Adrenal gland (tissue), 19 donors: ENCODE measurements at regions of chr2 and their contacts with region 1.

Region 1: GRCh38 chr2:200703127-200703925 is 108.4 kb upstream of the BZW1 start:
- DNase-seq: peak in 5 of 7 donors; percentile 37 to 67 (median 54)
- H3K4me3 ChIP-seq: no peak overlapping the region
- H3K27ac ChIP-seq: peak overlapping the region in 1 of 5 donors; percentile 2
- H3K4me1 ChIP-seq: no peaks in the 10 kb centered on the region
- H3K27me3 ChIP-seq: no peaks in the 10 kb centered on the region
- CTCF ChIP-seq: peak; percentile 34 to 82 (median 66)
- POLR2A ChIP-seq: no peak

Region 2: GRCh38 chr2:200483729-200484198 is 219.6 kb before region 1 on chr2:
- intact Hi-C with region 1: loop called in 1 of 2 experiments (anchors 5 kb)
- DNase-seq: peak; percentile 35 to 72 (median 62)
- H3K4me3 ChIP-seq: no peak overlapping the region
- H3K27ac ChIP-seq: no peak overlapping the region
- H3K4me1 ChIP-seq: no peaks in the 10 kb centered on the region
- H3K27me3 ChIP-seq: no peaks in the 10 kb centered on the region
- CTCF ChIP-seq: peak; percentile 34 to 55 (median 44)
- POLR2A ChIP-seq: no peak

Region 3: GRCh38 chr2:200578778-200579177 is 124.5 kb before region 1 on chr2:
- intact Hi-C with region 1: loop called (anchors 5 kb)
- DNase-seq: peak in 2 of 7 donors; percentile 35 to 40
- H3K4me3 ChIP-seq: no peak overlapping the region
- H3K27ac ChIP-seq: no peak overlapping the region
- H3K4me1 ChIP-seq: peaks cover 0 to 5% of the 10 kb centered on the region in 2 donors
- H3K27me3 ChIP-seq: no peaks in the 10 kb centered on the region
- CTCF ChIP-seq: peak; percentile 27 to 70 (median 62)
- POLR2A ChIP-seq: no peak

Region 4: DNA sequence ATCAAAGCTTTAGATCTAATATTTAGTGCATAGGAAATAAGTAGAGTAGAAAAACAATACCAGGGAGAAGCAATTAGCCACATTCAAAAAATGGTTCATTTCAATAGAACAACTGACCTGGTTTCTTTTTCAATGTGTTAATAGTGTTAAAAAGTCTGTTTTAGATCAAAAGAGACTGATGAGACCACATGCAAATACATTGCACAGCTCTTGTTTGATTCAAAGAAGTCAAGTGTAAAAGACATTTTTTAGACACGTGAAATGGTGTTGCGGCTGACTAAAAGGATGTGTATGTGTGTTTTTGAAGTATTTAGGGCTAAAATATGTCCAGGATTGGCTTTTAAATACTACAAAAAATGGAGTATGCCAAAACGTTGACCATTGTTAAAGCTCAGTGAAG is 118.7 kb before region 1 on chr2:
- intact Hi-C with region 1: loop called (anchors 5 kb)
- DNase-seq: no peak
- H3K4me3 ChIP-seq: no peak overlapping the region
- H3K27ac ChIP-seq: no peak overlapping the region
- H3K4me1 ChIP-seq: peaks cover 3 to 14% of the 10 kb centered on the region in 2 donors
- H3K27me3 ChIP-seq: no peaks in the 10 kb centered on the region
- CTCF ChIP-seq: no peak
- POLR2A ChIP-seq: no peak

Region 5: DNA sequence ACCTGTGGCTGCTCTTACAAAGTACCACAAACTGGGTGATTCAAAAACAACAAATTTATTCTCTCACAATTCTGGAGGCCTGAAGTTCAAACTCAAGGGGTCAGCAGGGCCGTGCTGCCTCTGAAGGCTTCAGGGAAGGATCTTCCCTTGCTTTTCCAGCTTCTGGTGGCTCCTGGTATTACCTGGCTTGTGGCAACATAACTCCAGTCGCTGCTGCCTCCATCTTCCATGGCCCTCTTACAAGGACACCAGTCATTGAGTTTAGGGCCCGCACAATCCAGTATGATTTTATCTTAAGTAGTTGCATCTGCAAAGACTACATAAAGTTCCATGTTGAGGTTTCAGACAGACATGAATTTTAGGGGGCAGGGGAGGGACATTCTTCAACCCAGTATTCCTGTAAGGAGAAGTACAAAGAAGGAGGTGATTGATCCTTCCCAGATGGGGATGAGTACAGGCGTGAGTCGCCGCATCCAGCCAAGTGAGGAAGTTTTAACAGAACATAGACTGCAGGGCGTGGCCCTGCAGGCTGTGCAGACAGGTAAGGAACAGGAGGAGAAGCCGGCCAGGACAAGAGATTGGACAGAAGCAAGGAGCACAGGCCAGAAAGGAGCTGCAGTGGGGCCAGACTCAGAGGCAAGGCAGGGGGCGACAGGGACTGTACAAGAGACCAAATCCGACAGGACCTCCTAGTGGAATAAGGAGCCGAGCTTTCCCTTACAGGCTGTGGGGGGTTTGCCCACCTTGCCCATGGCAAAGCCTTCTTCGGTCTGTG is 64.0 kb after region 1 on chr2:
- intact Hi-C with region 1: no loop called
- DNase-seq: no peak
- H3K4me3 ChIP-seq: no peak overlapping the region
- H3K27ac ChIP-seq: no peak overlapping the region
- H3K4me1 ChIP-seq: no peaks in the 10 kb centered on the region
- H3K27me3 ChIP-seq: no peaks in the 10 kb centered on the region
- CTCF ChIP-seq: no peak
- POLR2A ChIP-seq: no peak

Region 6: DNA sequence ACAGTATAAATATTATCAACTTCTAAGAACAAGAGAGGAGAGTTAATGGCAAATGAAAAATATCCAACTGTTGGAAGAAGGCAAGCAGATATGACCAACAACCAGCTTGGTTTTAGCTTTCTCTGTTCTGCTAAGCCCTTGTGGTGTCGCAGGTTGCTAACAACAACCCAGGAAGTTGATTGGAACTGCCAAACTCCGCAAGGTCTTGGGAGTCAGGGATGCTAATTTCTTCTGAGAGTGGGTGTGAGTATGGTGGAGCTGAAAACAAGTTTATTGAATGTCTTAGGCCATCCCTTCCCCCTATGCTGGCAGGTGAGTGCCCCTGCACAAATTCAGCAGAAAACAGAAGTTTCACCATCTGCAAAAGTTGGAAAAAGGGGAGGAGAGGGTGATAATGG is 125.9 kb after region 1 on chr2:
- intact Hi-C with region 1: no loop called
- DNase-seq: peak in 1 of 7 donors; percentile 23
- H3K4me3 ChIP-seq: no peak overlapping the region
- H3K27ac ChIP-seq: no peak overlapping the region
- H3K4me1 ChIP-seq: peaks cover 21 to 26% of the 10 kb centered on the region in 2 donors
- H3K27me3 ChIP-seq: no peaks in the 10 kb centered on the region
- CTCF ChIP-seq: no peak
- POLR2A ChIP-seq: no peak